MCF 10A (cell line): ENCODE measurements at regions of chr13 and their contacts with region 1.

Region 1: DNA sequence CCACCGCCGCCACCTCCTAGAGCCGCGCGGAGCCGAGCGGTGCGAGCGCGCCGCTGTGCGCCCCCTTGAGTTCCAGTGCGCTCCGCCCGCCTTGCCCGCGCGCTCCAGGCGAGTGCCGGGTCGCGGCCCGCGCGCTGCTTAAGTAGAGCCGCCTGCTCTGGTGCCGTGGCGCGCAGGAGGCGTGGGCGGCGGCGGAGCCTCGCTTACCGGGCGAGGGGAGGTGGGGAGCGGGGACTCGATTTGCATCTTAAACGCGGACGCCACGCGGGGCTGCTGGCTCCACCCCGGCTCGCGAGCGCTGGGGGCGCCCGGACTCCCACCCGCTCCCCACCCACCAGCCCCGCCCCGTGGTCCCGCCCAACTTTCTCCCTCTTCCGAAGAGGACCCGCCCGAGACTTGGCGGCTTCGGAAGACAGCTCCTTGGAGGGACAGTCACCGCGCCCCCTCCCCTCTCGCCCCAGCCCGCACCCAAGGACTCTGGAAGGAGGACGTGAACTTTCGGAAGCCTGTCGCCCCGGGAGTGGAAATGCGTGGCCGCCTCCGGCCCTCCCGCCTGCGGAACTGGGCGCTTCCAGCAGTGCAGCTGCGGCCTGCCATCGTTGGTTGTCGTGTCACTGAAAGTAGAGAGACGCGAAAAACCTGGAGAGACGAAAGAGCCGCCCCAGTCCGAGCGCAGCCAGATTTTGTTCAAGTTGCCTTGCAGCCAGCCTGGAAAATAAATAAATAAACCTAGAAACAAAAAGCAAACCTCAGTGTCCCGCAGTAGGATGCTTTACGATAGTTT is at the start of gene KCTD12:
- DNase-seq: peak; percentile 72
- H3K4me3 Mint-ChIP-seq: peak within 1 kb of the TSS; percentile 94
- H3K27ac Mint-ChIP-seq: peak within 1 kb of the TSS; percentile 78
- H3K4me1 Mint-ChIP-seq: peaks cover 35% of the 10 kb centered on the region
- H3K27me3 Mint-ChIP-seq: no peaks in the 10 kb centered on the region
- CTCF ChIP-seq: peak; percentile 25
- total RNA-seq, gene KCTD12: 15.6 and 15.8 TPM in 2 replicates

Region 2: GRCh38 chr13:75870397-75870903 is 1016.0 kb before region 1 on chr13:
- CTCF ChIA-PET with region 1: interaction called, 52 read pairs
- POLR2A ChIA-PET with region 1: interaction called, 3 read pairs
- intact Hi-C with region 1: loop called (anchors 5 kb)
- DNase-seq: peak; percentile 30
- H3K4me3 Mint-ChIP-seq: peak overlapping the region; percentile 77
- H3K27ac Mint-ChIP-seq: no peak overlapping the region
- H3K4me1 Mint-ChIP-seq: no peaks in the 10 kb centered on the region
- H3K27me3 Mint-ChIP-seq: no peaks in the 10 kb centered on the region
- CTCF ChIP-seq: peak; percentile 62

Region 3: DNA sequence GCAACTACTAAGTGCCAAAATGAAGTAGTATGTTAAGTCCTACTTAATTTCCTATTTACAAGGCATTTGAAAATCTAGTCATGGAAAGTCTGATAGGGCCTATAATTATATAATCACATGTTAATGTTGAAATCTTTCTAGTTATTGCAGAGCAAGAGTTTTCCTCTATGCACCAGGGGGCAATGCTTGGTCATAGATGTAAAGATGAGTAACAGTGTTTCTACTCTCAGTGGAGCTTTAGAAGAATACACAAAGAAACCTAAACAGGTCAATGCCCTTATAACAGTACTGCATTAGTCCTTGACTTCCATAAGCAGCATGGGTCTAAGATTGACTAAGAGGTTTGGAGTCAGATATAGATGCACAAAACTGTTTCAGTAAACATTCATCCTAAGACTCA is 218.9 kb before region 1 on chr13:
- CTCF ChIA-PET with region 1: interaction called, 101 read pairs
- POLR2A ChIA-PET with region 1: interaction called, 25 read pairs
- intact Hi-C with region 1: loop called (anchors 1 kb)
- DNase-seq: peak; percentile 59
- H3K4me3 Mint-ChIP-seq: no peak overlapping the region
- H3K27ac Mint-ChIP-seq: no peak overlapping the region
- H3K4me1 Mint-ChIP-seq: peaks cover 20% of the 10 kb centered on the region
- H3K27me3 Mint-ChIP-seq: no peaks in the 10 kb centered on the region
- CTCF ChIP-seq: peak; percentile 26

Region 4: DNA sequence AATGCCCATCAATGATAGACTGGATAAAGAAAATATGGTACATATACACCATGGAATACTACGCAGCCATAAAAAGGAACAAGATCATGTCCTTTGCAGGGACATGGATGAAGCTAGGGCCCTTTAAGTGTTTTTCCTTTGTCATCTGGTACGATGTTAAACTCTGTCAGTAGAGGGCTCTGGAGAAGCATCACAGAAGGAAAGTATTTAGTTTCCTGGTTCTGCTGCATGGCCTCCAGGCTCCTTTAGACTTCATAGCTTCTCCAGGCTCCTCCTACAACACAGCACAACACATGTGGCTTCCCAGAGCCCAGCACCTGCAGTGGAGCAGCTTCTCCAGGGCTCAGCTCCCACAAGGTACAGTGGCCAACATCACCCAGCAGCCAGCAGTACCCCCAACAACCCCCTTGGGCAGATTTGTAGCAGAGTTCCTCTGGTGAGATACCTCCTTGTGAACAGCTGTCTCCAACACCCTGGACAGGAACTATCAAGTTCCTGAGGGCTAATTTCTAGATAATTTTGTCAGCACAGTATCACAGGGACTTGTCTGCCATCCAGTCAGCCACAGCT is 63.7 kb before region 1 on chr13:
- CTCF ChIA-PET with region 1: interaction called, 48 read pairs
- POLR2A ChIA-PET with region 1: interaction called, 12 read pairs
- intact Hi-C with region 1: loop called (anchors 1 kb)
- DNase-seq: peak; percentile 51
- H3K4me3 Mint-ChIP-seq: no peak overlapping the region
- H3K27ac Mint-ChIP-seq: no peak overlapping the region
- H3K4me1 Mint-ChIP-seq: no peaks in the 10 kb centered on the region
- H3K27me3 Mint-ChIP-seq: peaks cover 12% of the 10 kb centered on the region
- CTCF ChIP-seq: peak; percentile 37

Region 5: DNA sequence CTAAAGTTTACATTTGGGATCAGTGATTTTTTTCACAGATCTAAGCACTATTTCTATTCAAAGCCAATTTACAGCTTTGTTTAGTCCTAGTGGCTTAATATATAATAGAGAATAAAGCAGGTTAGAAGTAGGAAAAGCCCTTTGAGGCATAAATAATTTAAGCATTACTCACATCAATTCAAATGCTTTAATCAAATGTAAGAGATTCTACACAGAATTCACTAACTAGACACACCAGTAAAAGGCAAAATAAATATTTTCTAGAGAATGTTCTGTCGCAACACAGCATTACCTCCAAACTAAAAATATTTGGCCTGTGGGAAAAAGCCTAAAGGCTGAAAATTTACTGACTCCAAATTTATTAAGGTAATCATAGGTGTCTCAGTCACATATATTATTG is 31.6 kb before region 1 on chr13:
- CTCF ChIA-PET with region 1: interaction called, 50 read pairs
- POLR2A ChIA-PET with region 1: interaction called, 71 read pairs
- intact Hi-C with region 1: loop called (anchors 2 kb)
- DNase-seq: peak; percentile 49
- H3K4me3 Mint-ChIP-seq: no peak overlapping the region
- H3K27ac Mint-ChIP-seq: peak overlapping the region; percentile 77
- H3K4me1 Mint-ChIP-seq: peaks cover 36% of the 10 kb centered on the region
- H3K27me3 Mint-ChIP-seq: no peaks in the 10 kb centered on the region
- CTCF ChIP-seq: no peak

Region 6: DNA sequence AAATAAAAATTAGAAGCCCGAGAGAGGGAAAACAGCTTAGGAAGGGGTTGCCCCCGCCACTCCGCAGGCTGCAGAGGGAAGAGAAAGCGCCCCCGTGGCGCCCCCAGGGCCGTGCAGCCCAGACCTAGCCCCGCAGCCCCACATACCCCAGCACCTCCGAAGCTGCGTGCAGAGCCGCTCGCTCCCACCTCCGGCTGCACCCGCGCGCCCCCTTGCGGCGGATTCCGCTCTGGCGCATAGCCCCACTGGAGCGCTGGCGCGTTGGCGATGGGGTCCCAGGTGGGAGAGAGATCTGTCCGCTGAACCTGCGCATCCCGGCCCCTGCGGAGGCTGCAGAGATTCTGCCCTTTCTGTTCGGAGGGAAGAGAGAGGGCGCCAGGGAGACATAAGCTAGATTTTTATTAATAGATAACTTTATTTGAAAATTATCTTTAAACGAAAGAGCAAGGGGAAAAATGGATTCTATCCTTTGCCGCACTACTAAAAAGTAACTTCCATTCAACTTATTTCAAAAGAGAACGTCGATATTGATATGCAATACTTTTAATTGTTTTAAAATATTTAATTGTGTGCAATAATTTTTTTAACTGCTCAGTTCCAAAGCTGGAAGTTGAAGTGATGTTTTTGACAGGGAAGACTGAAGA is 93.7 kb after region 1 on chr13:
- CTCF ChIA-PET with region 1: interaction called, 12 read pairs
- POLR2A ChIA-PET with region 1: interaction called, 12 read pairs
- intact Hi-C with region 1: loop called (anchors 5 kb)
- DNase-seq: peak; percentile 70
- H3K4me3 Mint-ChIP-seq: peak overlapping the region; percentile 52
- H3K27ac Mint-ChIP-seq: no peak overlapping the region
- H3K4me1 Mint-ChIP-seq: peaks cover 19% of the 10 kb centered on the region
- H3K27me3 Mint-ChIP-seq: peaks cover 20% of the 10 kb centered on the region
- CTCF ChIP-seq: peak; percentile 94

Region 7: GRCh38 chr13:77213644-77214043 is 327.2 kb after region 1 on chr13:
- CTCF ChIA-PET with region 1: no interaction called
- POLR2A ChIA-PET with region 1: no interaction called
- intact Hi-C with region 1: no loop called
- DNase-seq: no peak
- H3K4me3 Mint-ChIP-seq: no peak overlapping the region
- H3K27ac Mint-ChIP-seq: no peak overlapping the region
- H3K4me1 Mint-ChIP-seq: no peaks in the 10 kb centered on the region
- H3K27me3 Mint-ChIP-seq: no peaks in the 10 kb centered on the region
- CTCF ChIP-seq: no peak